ENCODE measurements at regions of chr7 and their contacts with region 1.

Region 1: DNA sequence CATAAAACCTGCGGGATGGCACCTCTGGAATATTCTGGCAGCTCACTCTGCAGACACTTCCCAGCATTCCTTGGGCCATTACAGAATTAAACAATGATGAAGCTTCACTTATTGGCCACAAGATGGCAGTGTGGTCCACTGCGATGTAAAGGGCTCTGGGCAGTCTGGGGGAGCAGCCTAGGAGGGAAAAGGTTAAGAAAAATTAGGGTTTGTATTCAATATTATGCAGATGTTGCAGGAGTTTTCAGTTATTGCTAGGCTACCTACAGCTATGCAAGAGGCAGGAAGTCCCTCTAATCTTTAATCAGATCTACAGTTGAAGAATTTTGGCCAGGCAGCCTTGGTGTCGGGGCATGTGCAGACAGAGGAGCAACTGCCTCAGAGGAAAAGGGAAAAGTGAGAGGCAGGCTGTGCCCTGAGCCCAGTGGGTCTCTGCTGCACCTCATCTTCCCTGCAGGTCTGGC is 233.2 kb upstream of the PRSS1 start:
- DNase-seq: no peak
- ATAC-seq: peak; percentile 80
- H3K4me3 Mint-ChIP-seq: no peak overlapping the region
- H3K27ac Mint-ChIP-seq: no peak overlapping the region
- H3K4me1 Mint-ChIP-seq: no peaks in the 10 kb centered on the region
- H3K27me3 Mint-ChIP-seq: peaks cover 5% of the 10 kb centered on the region
- CTCF ChIP-seq: no peak

Region 2: DNA sequence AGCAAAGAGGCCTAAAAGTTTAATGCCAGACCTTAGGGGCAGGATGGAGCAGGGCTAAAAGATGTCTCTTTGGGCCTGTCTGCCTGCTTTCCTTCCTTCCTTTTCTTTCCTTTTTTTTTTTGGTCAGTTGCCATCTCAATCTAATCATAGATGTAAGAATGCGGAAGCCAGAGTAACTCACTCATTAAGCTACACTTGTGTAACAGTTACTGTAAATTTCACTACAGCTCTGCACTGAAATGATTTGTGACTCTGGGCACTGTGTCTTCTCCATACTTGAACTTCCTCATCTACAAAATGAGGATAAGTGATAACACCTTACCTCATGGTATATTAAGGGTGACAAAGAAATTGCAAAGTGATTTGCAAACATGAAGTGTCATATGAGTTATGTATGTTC is 1040.4 kb before region 1 on chr7:
- CTCF ChIA-PET with region 1: no interaction called
- POLR2A ChIA-PET with region 1: no interaction called
- intact Hi-C with region 1: no loop called
- DNase-seq: no peak
- ATAC-seq: no peak
- H3K4me3 Mint-ChIP-seq: no peak overlapping the region
- H3K27ac Mint-ChIP-seq: no peak overlapping the region
- H3K4me1 Mint-ChIP-seq: no peaks in the 10 kb centered on the region
- H3K27me3 Mint-ChIP-seq: peaks cover 5% of the 10 kb centered on the region
- CTCF ChIP-seq: no peak

Region 3: GRCh38 chr7:142500364-142500763 is 15.7 kb before region 1 on chr7:
- CTCF ChIA-PET with region 1: interaction called, 8 read pairs
- POLR2A ChIA-PET with region 1: no interaction called
- intact Hi-C with region 1: loop called (anchors 1 kb)
- DNase-seq: no peak
- ATAC-seq: no peak
- H3K4me3 Mint-ChIP-seq: no peak overlapping the region
- H3K27ac Mint-ChIP-seq: no peak overlapping the region
- H3K4me1 Mint-ChIP-seq: peaks cover 4% of the 10 kb centered on the region
- H3K27me3 Mint-ChIP-seq: peaks cover 35% of the 10 kb centered on the region
- CTCF ChIP-seq: no peak

Region 4: GRCh38 chr7:142571581-142571980 is 55.5 kb after region 1 on chr7:
- CTCF ChIA-PET with region 1: no interaction called
- POLR2A ChIA-PET with region 1: no interaction called
- intact Hi-C with region 1: no loop called
- DNase-seq: no peak
- ATAC-seq: no peak
- H3K4me3 Mint-ChIP-seq: no peak overlapping the region
- H3K27ac Mint-ChIP-seq: no peak overlapping the region
- H3K4me1 Mint-ChIP-seq: no peaks in the 10 kb centered on the region
- H3K27me3 Mint-ChIP-seq: peaks cover 26% of the 10 kb centered on the region
- CTCF ChIP-seq: no peak

Region 5: DNA sequence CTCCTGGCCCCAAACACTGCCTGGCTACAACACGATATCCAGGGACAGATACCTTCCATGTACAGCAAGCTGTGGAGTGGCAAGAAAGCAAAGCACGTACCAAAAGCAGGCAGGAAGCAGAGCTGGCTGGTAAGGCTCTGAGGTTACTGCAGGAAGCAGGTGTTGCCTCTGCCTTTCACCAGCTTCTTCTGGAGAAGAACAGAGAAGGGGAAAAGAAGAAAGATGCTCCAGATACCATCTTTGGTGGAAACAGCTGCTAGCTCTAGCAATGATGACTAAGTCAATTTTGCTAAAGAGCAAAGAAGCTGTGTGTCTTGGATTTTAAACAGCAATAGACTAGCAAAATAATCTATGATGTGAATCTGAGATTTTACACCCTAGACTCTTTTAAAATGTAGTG is 198.3 kb after region 1 on chr7:
- CTCF ChIA-PET with region 1: no interaction called
- POLR2A ChIA-PET with region 1: no interaction called
- intact Hi-C with region 1: no loop called
- DNase-seq: no peak
- ATAC-seq: no peak
- H3K4me3 Mint-ChIP-seq: no peak overlapping the region
- H3K27ac Mint-ChIP-seq: peak overlapping the region; percentile 32
- H3K4me1 Mint-ChIP-seq: peaks cover 31% of the 10 kb centered on the region
- H3K27me3 Mint-ChIP-seq: no peaks in the 10 kb centered on the region
- CTCF ChIP-seq: no peak

Measured in activated B cell treated with CpG ODN at 0.5 μM for 24 hours (primary cell).